A673 (cell line): ENCODE measurements at regions of chr12 and their contacts with region 1.

Region 1: GRCh38 chr12:89542912-89543592 is 17.2 kb upstream of the POC1B start:
- DNase-seq: peak; percentile 88
- H3K4me3 ChIP-seq: no peak overlapping the region
- H3K27ac ChIP-seq: no peak overlapping the region
- H3K4me1 ChIP-seq: peaks cover 13% of the 10 kb centered on the region
- H3K27me3 ChIP-seq: no peaks in the 10 kb centered on the region
- CTCF ChIP-seq: peak; percentile 93

Region 2: DNA sequence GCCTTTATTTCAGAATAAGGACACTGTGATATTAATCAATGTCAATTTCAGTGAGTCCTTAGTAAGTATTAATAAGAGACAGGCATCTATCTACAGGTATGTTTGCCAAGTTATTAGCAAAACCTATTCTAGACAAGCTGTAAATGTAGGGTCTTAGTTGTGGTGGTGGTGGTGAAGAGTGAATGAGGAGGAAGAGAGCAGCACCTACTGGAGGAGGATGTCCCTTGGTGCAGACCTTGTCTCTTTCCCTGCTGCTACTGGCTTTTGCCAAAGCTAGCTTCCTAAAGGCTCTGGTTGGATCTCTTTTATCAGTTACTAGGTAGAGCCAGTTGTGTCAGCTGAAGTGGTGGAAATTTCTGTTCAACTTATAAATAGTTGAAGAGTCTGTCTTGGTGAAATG is 470.4 kb after region 1 on chr12:
- CTCF ChIA-PET with region 1: no interaction called
- POLR2A ChIA-PET with region 1: no interaction called
- intact Hi-C with region 1: loop called (anchors 5 kb)
- DNase-seq: no peak
- H3K4me3 ChIP-seq: no peak overlapping the region
- H3K27ac ChIP-seq: no peak overlapping the region
- H3K4me1 ChIP-seq: peaks cover 10% of the 10 kb centered on the region
- H3K27me3 ChIP-seq: no peaks in the 10 kb centered on the region
- CTCF ChIP-seq: 0 out of 2 replicates have a peak, but pooled peaks have one; percentile 36

Region 3: GRCh38 chr12:90253674-90254181 is 710.7 kb after region 1 on chr12:
- CTCF ChIA-PET with region 1: no interaction called
- POLR2A ChIA-PET with region 1: no interaction called
- intact Hi-C with region 1: loop called (anchors 10 kb)
- DNase-seq: no peak
- H3K4me3 ChIP-seq: no peak overlapping the region
- H3K27ac ChIP-seq: no peak overlapping the region
- H3K4me1 ChIP-seq: peaks cover 4% of the 10 kb centered on the region
- H3K27me3 ChIP-seq: no peaks in the 10 kb centered on the region
- CTCF ChIP-seq: no peak

Region 4: GRCh38 chr12:90854136-90854689 is 1311.2 kb after region 1 on chr12:
- CTCF ChIA-PET with region 1: no interaction called
- POLR2A ChIA-PET with region 1: no interaction called
- intact Hi-C with region 1: loop called (anchors 5 kb)
- DNase-seq: peak; percentile 63
- H3K4me3 ChIP-seq: no peak overlapping the region
- H3K27ac ChIP-seq: no peak overlapping the region
- H3K4me1 ChIP-seq: no peaks in the 10 kb centered on the region
- H3K27me3 ChIP-seq: no peaks in the 10 kb centered on the region
- CTCF ChIP-seq: peak; percentile 85